Heart right ventricle (tissue), 16 donors: ENCODE measurements at regions of chr15 and their contacts with region 1.

Region 1: DNA sequence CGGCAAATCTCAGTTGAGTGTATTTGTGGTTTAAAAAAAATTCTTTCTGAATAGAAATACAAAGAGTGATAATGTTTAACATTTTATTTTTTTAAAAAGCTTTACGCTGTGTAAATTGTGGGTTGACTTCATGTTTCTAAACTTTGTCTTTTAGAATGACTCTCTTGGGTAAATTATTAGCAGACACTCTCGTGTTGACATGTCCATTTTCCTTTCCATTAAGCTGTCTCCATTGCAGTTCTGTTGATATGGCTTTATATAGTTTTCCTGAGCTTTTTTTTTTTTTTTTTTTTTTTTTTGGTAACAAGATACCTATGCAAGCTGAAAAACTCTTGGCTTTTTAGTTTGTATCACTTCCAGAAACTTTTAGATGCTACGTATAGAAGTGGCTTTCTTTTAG is 92.6 kb downstream of the IGF1R start:
- DNase-seq: no peak
- ATAC-seq: no peak
- H3K4me3 ChIP-seq: no peak overlapping the region
- H3K27ac ChIP-seq: no peak overlapping the region
- H3K4me1 ChIP-seq: peaks cover 0 to 71% (median 40%) of the 10 kb centered on the region in 9 donors
- H3K27me3 ChIP-seq: no peaks in the 10 kb centered on the region
- CTCF ChIP-seq: no peak

Region 2: GRCh38 chr15:97084650-97085049 is 1656.3 kb before region 1 on chr15:
- intact Hi-C with region 1: no loop called
- DNase-seq: no peak
- ATAC-seq: no peak
- H3K4me3 ChIP-seq: no peak overlapping the region
- H3K27ac ChIP-seq: no peak overlapping the region
- H3K4me1 ChIP-seq: no peaks in the 10 kb centered on the region
- H3K27me3 ChIP-seq: peaks cover 0 to 21% (median 7%) of the 10 kb centered on the region in 7 donors
- CTCF ChIP-seq: no peak

Region 3: GRCh38 chr15:98785807-98786621 is 45.1 kb after region 1 on chr15:
- intact Hi-C with region 1: loop called in 1 of 10 experiments (anchors 1 kb)
- DNase-seq: peak in 1 of 2 donors; percentile 38
- ATAC-seq: peak; percentile 41 to 90 (median 81)
- H3K4me3 ChIP-seq: no peak overlapping the region
- H3K27ac ChIP-seq: peak overlapping the region in 6 of 10 donors; percentile 24 to 65 (median 44)
- H3K4me1 ChIP-seq: peaks cover 6 to 62% (median 46%) of the 10 kb centered on the region in 9 donors
- H3K27me3 ChIP-seq: no peaks in the 10 kb centered on the region
- CTCF ChIP-seq: peak in 1 of 9 donors; percentile 5

Region 4: GRCh38 chr15:98850961-98851573 is 110.1 kb after region 1 on chr15:
- intact Hi-C with region 1: no loop called
- DNase-seq: peak; percentile 69 to 71
- ATAC-seq: peak; percentile 59 to 79 (median 71)
- H3K4me3 ChIP-seq: peak overlapping the region in 4 of 10 donors; percentile 69 to 80 (median 74)
- H3K27ac ChIP-seq: peak overlapping the region; percentile 65 to 90 (median 86)
- H3K4me1 ChIP-seq: peaks cover 23 to 68% (median 54%) of the 10 kb centered on the region in 9 donors
- H3K27me3 ChIP-seq: no peaks in the 10 kb centered on the region
- CTCF ChIP-seq: peak; percentile 52 to 82 (median 76)

Region 5: GRCh38 chr15:98896802-98897732 is 156.1 kb after region 1 on chr15:
- intact Hi-C with region 1: no loop called
- DNase-seq: no peak
- ATAC-seq: peak; percentile 48 to 95 (median 58)
- H3K4me3 ChIP-seq: no peak overlapping the region
- H3K27ac ChIP-seq: peak overlapping the region in 7 of 10 donors; percentile 31 to 74 (median 35)
- H3K4me1 ChIP-seq: peaks cover 0 to 35% (median 13%) of the 10 kb centered on the region in 9 donors
- H3K27me3 ChIP-seq: no peaks in the 10 kb centered on the region
- CTCF ChIP-seq: no peak